GM12878 (cell line): ENCODE measurements at regions of chrX and their contacts with region 1.

Region 1: DNA sequence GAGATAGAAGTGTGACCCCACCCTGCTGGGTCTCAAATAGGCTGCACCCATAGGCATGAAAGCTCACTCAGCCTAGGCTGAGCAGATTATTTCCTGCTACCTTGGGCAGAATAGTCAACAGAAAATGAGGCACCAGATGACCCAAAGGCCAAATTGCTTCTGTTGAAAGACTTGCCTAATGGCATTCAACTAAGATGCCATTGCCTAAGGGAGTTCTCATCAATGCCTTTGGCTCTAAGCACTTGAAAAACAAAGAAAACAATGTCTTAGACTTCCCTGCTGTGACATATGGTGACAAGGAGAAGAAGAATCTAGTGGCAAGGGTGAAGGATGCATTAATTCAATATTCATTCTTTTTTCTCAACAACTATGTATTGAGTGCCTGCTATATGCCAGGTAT is 25.6 kb upstream of the PCDH19 start:
- DNase-seq: no peak
- ATAC-seq: no peak
- H3K4me3 ChIP-seq: no peak overlapping the region
- H3K27ac ChIP-seq: no peak overlapping the region
- H3K4me1 ChIP-seq: no peaks in the 10 kb centered on the region
- H3K27me3 ChIP-seq: no peaks in the 10 kb centered on the region
- CTCF ChIP-seq: no peak
- EP300 ChIP-seq: no peak
- POLR2A ChIP-seq: no peak
- RAD21 ChIP-seq: no peak

Region 2: DNA sequence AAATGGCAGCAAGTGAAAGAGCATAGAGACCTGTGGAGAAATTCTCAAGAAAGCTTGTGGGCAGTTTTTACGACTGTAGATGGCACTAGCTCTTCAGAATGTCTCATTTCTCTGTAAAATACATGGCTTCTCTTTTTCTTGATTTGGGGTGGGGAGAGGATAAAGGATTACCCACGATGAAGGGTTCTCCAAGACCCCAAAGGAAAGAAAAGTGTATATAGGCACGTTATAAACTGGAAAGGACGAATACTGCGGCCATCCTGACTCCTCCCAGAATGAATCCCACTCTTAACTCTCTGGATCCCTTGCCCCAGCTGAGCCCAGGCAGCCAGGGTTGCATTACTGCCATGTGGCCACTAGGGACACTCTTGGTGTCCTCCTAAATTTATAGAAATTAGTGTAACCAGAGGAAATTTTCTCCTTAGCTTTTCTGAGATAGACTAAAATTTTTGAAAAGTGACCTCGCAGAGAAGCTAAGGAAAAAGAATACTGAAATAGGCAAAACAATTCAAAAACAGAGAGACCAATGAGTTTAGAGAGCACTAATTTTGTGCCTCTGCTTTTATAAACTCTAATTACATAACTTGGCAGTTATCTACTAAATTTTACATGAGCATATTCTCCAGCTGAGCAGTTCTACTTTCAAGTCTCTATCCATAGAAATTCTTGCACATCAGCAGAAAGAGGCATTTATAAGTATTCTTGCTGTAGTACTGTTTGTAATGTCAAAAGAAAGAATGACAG is 12.1 kb after region 1 on chrX:
- CTCF ChIA-PET with region 1: interaction called, 14 read pairs
- POLR2A ChIA-PET with region 1: no interaction called
- RAD21 ChIA-PET with region 1: no interaction called
- SMC1A ChIA-PET with region 1: interaction called, 3 read pairs
- in situ Hi-C with region 1: no loop called
- intact Hi-C with region 1: no loop called
- DNase-seq: no peak
- ATAC-seq: peak; percentile 72
- H3K4me3 ChIP-seq: no peak overlapping the region
- H3K27ac ChIP-seq: no peak overlapping the region
- H3K4me1 ChIP-seq: no peaks in the 10 kb centered on the region
- H3K27me3 ChIP-seq: no peaks in the 10 kb centered on the region
- CTCF ChIP-seq: peak; percentile 57 to 84 (median 84)
- EP300 ChIP-seq: no peak
- POLR2A ChIP-seq: no peak
- RAD21 ChIP-seq: no peak